ENCODE measurements at regions of chr1 and their contacts with region 1.

Region 1: DNA sequence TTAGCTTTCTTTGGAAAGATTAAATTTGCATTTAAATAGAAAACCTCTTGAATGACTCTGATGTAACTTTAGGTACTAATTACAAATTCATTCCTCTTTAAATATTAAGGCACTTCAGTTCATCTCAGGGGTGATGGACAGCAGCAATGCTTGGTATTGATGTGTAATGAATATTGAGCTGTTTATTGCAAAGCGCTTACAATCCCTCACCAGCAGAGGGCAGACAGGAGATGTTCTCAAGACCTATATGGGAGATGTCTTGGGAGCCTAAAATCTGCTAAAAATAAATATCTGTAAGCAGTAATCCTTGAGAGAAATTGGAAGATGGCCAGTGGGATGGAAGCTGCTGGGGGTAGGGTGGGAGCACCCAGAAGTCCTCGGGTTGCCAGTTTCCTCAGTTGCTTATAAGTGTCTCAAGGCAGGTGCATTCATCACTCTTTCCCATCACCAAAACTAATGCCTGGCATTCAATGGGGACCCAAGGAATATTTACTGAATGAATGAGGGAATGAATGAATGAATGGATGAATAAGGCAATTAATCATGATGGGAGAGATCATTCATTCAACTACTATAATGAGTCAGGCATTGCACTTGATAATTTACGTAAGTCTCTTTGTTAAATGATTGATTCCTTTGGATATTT is 2.3 kb downstream of the KLHDC8A start:
- DNase-seq: peak; percentile 30 to 81 (median 67)
- ATAC-seq: peak; percentile 87
- H3K4me3 ChIP-seq: no peak overlapping the region
- H3K4me3 Mint-ChIP-seq: no peak overlapping the region
- H3K27ac ChIP-seq: no peak overlapping the region
- H3K27ac Mint-ChIP-seq: no peak overlapping the region
- H3K4me1 ChIP-seq: no peaks in the 10 kb centered on the region
- H3K4me1 Mint-ChIP-seq: no peaks in the 10 kb centered on the region
- H3K27me3 ChIP-seq: no peaks in the 10 kb centered on the region
- H3K27me3 Mint-ChIP-seq: peaks cover 16% of the 10 kb centered on the region
- CTCF ChIP-seq: peak; percentile 97

Region 2: GRCh38 chr1:205032508-205032907 is 321.9 kb before region 1 on chr1:
- CTCF ChIA-PET with region 1: no interaction called
- POLR2A ChIA-PET with region 1: no interaction called
- intact Hi-C with region 1: no loop called
- DNase-seq: no peak
- ATAC-seq: no peak
- H3K4me3 ChIP-seq: no peak overlapping the region
- H3K4me3 Mint-ChIP-seq: no peak overlapping the region
- H3K27ac ChIP-seq: no peak overlapping the region
- H3K27ac Mint-ChIP-seq: no peak overlapping the region
- H3K4me1 ChIP-seq: no peaks in the 10 kb centered on the region
- H3K4me1 Mint-ChIP-seq: no peaks in the 10 kb centered on the region
- H3K27me3 ChIP-seq: no peaks in the 10 kb centered on the region
- H3K27me3 Mint-ChIP-seq: peaks cover 3% of the 10 kb centered on the region
- CTCF ChIP-seq: no peak

Region 3: DNA sequence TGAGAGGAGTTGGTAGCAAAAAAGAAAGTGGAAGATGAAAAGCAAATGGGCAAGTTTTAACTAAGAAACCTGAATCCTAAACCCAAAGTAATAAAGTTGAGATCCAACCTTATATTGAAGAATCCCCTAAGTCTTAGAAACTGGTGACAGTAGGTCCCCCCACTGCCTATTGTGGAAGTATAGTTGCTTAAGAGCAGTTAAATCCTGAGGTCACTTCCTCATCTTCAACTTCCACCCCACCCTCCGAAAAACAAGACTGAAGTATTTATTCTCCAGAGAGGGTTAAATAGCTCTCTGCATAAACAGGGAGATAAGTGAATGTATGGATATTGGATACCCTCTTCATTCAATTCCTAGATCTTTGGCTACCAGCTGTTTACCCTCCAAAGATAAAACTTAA is 139.6 kb before region 1 on chr1:
- CTCF ChIA-PET with region 1: no interaction called
- POLR2A ChIA-PET with region 1: no interaction called
- intact Hi-C with region 1: no loop called
- DNase-seq: no peak
- ATAC-seq: no peak
- H3K4me3 ChIP-seq: no peak overlapping the region
- H3K4me3 Mint-ChIP-seq: peak overlapping the region; percentile 47
- H3K27ac ChIP-seq: no peak overlapping the region
- H3K27ac Mint-ChIP-seq: no peak overlapping the region
- H3K4me1 ChIP-seq: peaks cover 15% of the 10 kb centered on the region
- H3K4me1 Mint-ChIP-seq: peaks cover 34% of the 10 kb centered on the region
- H3K27me3 ChIP-seq: no peaks in the 10 kb centered on the region
- H3K27me3 Mint-ChIP-seq: peaks cover 2% of the 10 kb centered on the region
- CTCF ChIP-seq: no peak

Region 4: DNA sequence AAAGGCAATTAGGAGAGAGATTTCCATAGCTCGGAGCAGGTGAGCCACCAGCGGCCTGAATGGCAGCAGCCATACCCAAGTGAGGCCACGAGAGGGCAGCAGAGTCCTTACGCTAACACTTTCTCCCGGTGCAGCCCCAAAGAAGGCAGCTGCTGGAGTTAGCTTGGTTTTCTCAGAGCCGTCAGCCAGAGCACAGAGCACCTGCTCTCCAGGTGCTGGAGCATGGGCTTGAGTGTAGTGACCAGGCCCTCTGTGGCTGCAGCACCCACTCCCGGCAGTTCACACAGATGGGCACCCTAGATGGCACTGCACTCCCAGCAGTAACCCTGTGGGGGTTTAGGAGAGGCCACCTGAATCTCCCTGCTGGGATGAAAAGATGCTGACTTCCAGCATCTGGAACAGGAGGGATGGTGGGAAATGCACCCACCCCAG is 80.8 kb before region 1 on chr1:
- CTCF ChIA-PET with region 1: interaction called, 95 read pairs
- POLR2A ChIA-PET with region 1: interaction called, 4 read pairs
- intact Hi-C with region 1: loop called in 1 of 2 experiments (anchors 1 kb)
- DNase-seq: peak; percentile 76 to 94 (median 86)
- ATAC-seq: peak; percentile 88
- H3K4me3 ChIP-seq: peak overlapping the region in 1 of 2 experiments; percentile 44
- H3K4me3 Mint-ChIP-seq: peak overlapping the region; percentile 61
- H3K27ac ChIP-seq: no peak overlapping the region
- H3K27ac Mint-ChIP-seq: peak overlapping the region; percentile 83
- H3K4me1 ChIP-seq: peaks cover 46% of the 10 kb centered on the region
- H3K4me1 Mint-ChIP-seq: peaks cover 40% of the 10 kb centered on the region
- H3K27me3 ChIP-seq: no peaks in the 10 kb centered on the region
- H3K27me3 Mint-ChIP-seq: no peaks in the 10 kb centered on the region
- CTCF ChIP-seq: peak; percentile 95

Region 5: GRCh38 chr1:205329719-205330118 is 24.7 kb before region 1 on chr1:
- CTCF ChIA-PET with region 1: interaction called, 28 read pairs
- POLR2A ChIA-PET with region 1: no interaction called
- intact Hi-C with region 1: no loop called
- DNase-seq: no peak
- ATAC-seq: no peak
- H3K4me3 ChIP-seq: no peak overlapping the region
- H3K4me3 Mint-ChIP-seq: no peak overlapping the region
- H3K27ac ChIP-seq: no peak overlapping the region
- H3K27ac Mint-ChIP-seq: no peak overlapping the region
- H3K4me1 ChIP-seq: peaks cover 8% of the 10 kb centered on the region
- H3K4me1 Mint-ChIP-seq: peaks cover 11% of the 10 kb centered on the region
- H3K27me3 ChIP-seq: no peaks in the 10 kb centered on the region
- H3K27me3 Mint-ChIP-seq: peaks cover 3% of the 10 kb centered on the region
- CTCF ChIP-seq: no peak

Region 6: DNA sequence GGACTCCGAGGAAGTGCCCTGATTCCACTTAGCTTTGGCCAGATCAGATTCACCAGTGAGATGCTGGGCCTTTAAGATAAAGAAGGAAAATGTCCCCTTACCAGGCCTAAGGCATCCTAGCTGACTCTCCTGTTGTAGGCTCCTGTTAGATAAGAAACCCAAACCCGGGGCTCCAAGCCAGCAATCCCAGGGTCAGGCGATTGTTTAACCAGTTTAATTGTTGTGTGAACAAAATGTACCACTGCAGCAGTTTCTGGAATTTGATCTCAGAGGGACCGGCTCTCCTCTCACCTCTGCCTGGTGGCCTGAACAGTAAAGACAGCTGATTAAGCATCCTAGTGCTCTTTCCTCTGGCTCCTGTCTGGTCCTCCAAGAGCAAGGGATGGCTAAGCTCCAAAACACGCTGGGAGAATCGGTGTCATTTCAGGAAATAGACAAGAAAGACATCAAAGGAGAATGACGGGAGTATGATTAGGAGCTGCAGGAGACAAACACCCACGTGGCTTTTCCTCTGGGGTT is 11.6 kb after region 1 on chr1:
- CTCF ChIA-PET with region 1: interaction called, 20 read pairs
- POLR2A ChIA-PET with region 1: no interaction called
- intact Hi-C with region 1: no loop called
- DNase-seq: no peak
- ATAC-seq: no peak
- H3K4me3 ChIP-seq: no peak overlapping the region
- H3K4me3 Mint-ChIP-seq: no peak overlapping the region
- H3K27ac ChIP-seq: no peak overlapping the region
- H3K27ac Mint-ChIP-seq: no peak overlapping the region
- H3K4me1 ChIP-seq: no peaks in the 10 kb centered on the region
- H3K4me1 Mint-ChIP-seq: no peaks in the 10 kb centered on the region
- H3K27me3 ChIP-seq: no peaks in the 10 kb centered on the region
- H3K27me3 Mint-ChIP-seq: peaks cover 5% of the 10 kb centered on the region
- CTCF ChIP-seq: no peak

Region 7: DNA sequence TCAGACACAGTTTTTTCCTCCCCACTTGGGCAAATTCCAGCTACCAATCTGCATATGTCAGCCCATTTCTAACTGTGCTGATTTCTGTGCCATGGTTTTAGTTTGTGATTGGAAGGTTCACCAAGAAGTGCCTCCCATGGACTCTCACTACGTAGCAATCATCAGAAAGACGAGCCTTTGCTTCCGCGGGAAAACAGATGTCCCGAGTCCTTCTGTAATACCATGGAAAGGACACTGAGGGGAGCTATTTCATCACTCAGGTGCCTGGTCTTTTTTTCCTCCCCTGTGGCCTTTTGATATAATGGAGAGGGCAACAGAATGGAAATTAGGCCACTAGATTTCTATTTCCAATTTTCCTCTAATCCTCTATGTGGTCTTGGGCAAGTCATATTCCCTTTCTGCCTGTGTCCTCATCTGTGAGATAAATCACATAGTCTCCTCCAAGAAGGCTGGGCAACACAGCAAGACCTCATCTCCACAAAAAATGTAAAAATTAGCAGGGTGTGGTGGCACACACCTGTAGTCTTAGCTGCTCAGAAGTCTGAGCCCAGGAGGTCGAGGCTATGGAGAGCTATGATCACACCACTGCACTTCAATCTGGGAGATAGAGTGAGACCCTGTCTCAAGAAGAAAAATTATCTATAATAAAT is 42.7 kb after region 1 on chr1:
- CTCF ChIA-PET with region 1: interaction called, 11 read pairs
- POLR2A ChIA-PET with region 1: no interaction called
- intact Hi-C with region 1: no loop called
- DNase-seq: peak in 3 of 9 experiments; percentile 8 to 70 (median 59)
- ATAC-seq: peak; percentile 74
- H3K4me3 ChIP-seq: no peak overlapping the region
- H3K4me3 Mint-ChIP-seq: no peak overlapping the region
- H3K27ac ChIP-seq: no peak overlapping the region
- H3K27ac Mint-ChIP-seq: no peak overlapping the region
- H3K4me1 ChIP-seq: no peaks in the 10 kb centered on the region
- H3K4me1 Mint-ChIP-seq: peaks cover 3% of the 10 kb centered on the region
- H3K27me3 ChIP-seq: peaks cover 0 to 5% of the 10 kb centered on the region in 2 experiments
- H3K27me3 Mint-ChIP-seq: peaks cover 13% of the 10 kb centered on the region
- CTCF ChIP-seq: peak; percentile 85

Region 8: GRCh38 chr1:205440476-205441317 is 86.3 kb after region 1 on chr1:
- CTCF ChIA-PET with region 1: interaction called, 10 read pairs
- POLR2A ChIA-PET with region 1: no interaction called
- intact Hi-C with region 1: loop called in 1 of 2 experiments (anchors 10 kb)
- DNase-seq: peak; percentile 32 to 85 (median 75)
- ATAC-seq: peak; percentile 95
- H3K4me3 ChIP-seq: peak overlapping the region; percentile 38 to 53
- H3K4me3 Mint-ChIP-seq: peak overlapping the region; percentile 82
- H3K27ac ChIP-seq: peak overlapping the region; percentile 47 to 77
- H3K27ac Mint-ChIP-seq: peak overlapping the region; percentile 92
- H3K4me1 ChIP-seq: peaks cover 25% of the 10 kb centered on the region
- H3K4me1 Mint-ChIP-seq: peaks cover 42% of the 10 kb centered on the region
- H3K27me3 ChIP-seq: no peaks in the 10 kb centered on the region
- H3K27me3 Mint-ChIP-seq: no peaks in the 10 kb centered on the region
- CTCF ChIP-seq: no peak

Region 9: DNA sequence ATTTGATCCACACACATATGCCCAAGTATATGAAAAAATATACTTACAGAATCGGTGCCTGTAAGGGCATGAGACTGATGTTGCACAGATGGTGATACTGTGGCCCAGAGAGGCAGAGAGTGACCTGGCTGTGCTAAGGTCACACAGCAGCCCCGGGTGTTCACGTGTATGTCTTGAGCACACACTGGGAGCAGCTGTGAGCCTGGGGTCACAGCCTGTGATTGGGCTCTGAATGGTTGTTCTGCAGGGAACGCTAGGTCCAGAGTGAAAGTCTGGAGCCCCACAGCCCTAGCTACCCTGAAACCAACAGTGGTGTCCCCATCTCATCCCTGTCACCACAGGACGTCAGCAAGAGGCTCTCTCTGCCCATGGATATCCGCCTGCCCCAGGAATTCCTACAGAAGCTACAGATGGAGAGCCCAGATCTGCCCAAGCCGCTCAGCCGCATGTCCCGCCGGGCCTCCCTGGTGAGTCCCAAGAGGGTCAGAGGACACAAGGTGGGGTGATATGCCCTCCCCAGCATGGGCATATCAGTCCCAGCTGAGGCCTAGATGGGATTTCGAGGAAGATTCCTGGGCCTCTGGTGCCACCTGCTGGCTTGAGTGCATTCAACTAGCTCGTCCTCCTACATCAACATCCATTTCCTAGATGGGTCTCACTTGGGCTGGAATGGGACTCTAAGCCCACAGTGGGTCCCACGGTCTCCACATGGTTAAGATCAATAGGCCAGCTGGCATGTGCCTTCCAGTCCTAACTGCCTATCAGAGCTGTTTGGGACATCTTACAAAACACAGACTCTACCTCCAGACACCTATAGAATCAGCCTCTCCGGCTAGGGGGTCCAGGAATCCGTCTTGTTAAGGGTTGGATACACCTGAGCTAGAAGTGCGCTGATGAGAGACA is 169.8 kb after region 1 on chr1:
- CTCF ChIA-PET with region 1: interaction called, 92 read pairs
- POLR2A ChIA-PET with region 1: no interaction called
- intact Hi-C with region 1: loop called (anchors 1 kb)
- DNase-seq: peak; percentile 47 to 82 (median 76)
- ATAC-seq: peak; percentile 70
- H3K4me3 ChIP-seq: no peak overlapping the region
- H3K4me3 Mint-ChIP-seq: no peak overlapping the region
- H3K27ac ChIP-seq: no peak overlapping the region
- H3K27ac Mint-ChIP-seq: no peak overlapping the region
- H3K4me1 ChIP-seq: no peaks in the 10 kb centered on the region
- H3K4me1 Mint-ChIP-seq: peaks cover under 1% of the 10 kb centered on the region
- H3K27me3 ChIP-seq: no peaks in the 10 kb centered on the region
- H3K27me3 Mint-ChIP-seq: no peaks in the 10 kb centered on the region
- CTCF ChIP-seq: peak; percentile 64

Measured in CD8-positive, alpha-beta T cell (primary cell).